ENCODE measurements at regions of chr1 and their contacts with region 1.

Region 1: GRCh38 chr1:194081444-194081843 is 895.0 kb upstream of the B3GALT2 start:
- DNase-seq: no peak
- ATAC-seq: no peak
- H3K4me3 ChIP-seq: no peak overlapping the region
- H3K4me3 Mint-ChIP-seq: no peak overlapping the region
- H3K27ac ChIP-seq: no peak overlapping the region
- H3K27ac Mint-ChIP-seq: no peak overlapping the region
- H3K4me1 ChIP-seq: no peaks in the 10 kb centered on the region
- H3K4me1 Mint-ChIP-seq: no peaks in the 10 kb centered on the region
- H3K27me3 ChIP-seq: no peaks in the 10 kb centered on the region
- H3K27me3 Mint-ChIP-seq: no peaks in the 10 kb centered on the region
- CTCF ChIP-seq: no peak

Region 2: DNA sequence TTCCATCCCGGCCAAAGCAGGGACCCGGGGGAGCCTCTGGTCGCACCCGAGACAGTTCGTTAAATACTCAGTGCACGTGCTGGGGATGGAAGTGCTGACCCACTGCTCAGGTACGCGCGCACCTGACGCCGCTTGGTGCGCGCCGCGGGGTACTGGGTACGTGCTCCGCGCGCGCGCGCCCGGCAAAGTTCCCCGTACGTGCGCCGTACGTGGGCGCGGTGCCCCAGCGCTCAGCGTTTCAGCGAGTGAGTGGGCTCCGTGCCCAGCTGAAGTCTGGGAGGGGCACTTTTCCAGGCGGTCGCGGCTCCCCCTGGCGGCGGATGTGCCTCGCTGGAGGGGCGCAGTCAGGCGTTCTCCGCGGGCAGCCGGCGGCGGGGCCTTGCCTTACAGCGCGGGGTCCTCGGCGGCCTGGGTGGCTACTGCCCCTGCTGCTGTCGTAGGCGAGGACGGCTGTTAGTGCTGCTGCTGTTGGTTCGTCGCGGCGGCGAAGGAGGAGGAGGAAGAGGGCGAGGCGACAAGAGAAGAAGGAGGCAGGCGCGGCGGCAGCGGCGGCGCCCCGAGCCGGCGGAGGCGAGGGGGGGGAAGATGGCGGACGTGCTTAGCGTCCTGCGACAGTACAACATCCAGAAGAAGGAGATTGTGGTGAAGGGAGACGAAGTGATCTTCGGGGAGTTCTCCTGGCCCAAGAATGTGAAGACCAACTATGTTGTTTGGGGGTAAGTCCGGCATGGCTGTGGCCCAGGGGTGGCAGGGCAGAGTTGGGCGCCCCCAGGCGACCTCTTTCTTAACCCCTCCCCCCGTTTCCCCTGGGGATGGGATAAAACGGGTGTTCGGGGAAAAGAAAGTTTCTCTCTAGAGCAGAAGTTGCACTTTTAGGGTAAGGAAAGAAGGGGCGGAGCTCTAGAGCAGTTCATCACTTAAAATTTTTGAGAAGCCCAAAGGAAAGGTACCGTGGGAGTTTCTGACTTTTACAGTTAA is 959.5 kb before region 1 on chr1 and contains the start of gene CDC73:
- CTCF ChIA-PET with region 1: no interaction called
- POLR2A ChIA-PET with region 1: no interaction called
- intact Hi-C with region 1: no loop called
- DNase-seq: peak; percentile 98 to 100 (median 99)
- ATAC-seq: peak; percentile 92
- H3K4me3 ChIP-seq: peak within 1 kb of the TSS; percentile 89 to 98
- H3K4me3 Mint-ChIP-seq: peak within 1 kb of the TSS; percentile 100
- H3K27ac ChIP-seq: peak within 1 kb of the TSS; percentile 94 to 96
- H3K27ac Mint-ChIP-seq: peak within 1 kb of the TSS; percentile 100
- H3K4me1 ChIP-seq: peaks cover 33% of the 10 kb centered on the region
- H3K4me1 Mint-ChIP-seq: peaks cover 55% of the 10 kb centered on the region
- H3K27me3 ChIP-seq: no peaks in the 10 kb centered on the region
- H3K27me3 Mint-ChIP-seq: no peaks in the 10 kb centered on the region
- CTCF ChIP-seq: peak; percentile 84
- total RNA-seq, gene CDC73: 73.9 to 78.8 TPM

Region 3: GRCh38 chr1:193794239-193794638 is 287.2 kb before region 1 on chr1:
- CTCF ChIA-PET with region 1: no interaction called
- POLR2A ChIA-PET with region 1: no interaction called
- intact Hi-C with region 1: no loop called
- DNase-seq: no peak
- ATAC-seq: no peak
- H3K4me3 ChIP-seq: no peak overlapping the region
- H3K4me3 Mint-ChIP-seq: no peak overlapping the region
- H3K27ac ChIP-seq: no peak overlapping the region
- H3K27ac Mint-ChIP-seq: no peak overlapping the region
- H3K4me1 ChIP-seq: no peaks in the 10 kb centered on the region
- H3K4me1 Mint-ChIP-seq: no peaks in the 10 kb centered on the region
- H3K27me3 ChIP-seq: no peaks in the 10 kb centered on the region
- H3K27me3 Mint-ChIP-seq: no peaks in the 10 kb centered on the region
- CTCF ChIP-seq: no peak

Region 4: DNA sequence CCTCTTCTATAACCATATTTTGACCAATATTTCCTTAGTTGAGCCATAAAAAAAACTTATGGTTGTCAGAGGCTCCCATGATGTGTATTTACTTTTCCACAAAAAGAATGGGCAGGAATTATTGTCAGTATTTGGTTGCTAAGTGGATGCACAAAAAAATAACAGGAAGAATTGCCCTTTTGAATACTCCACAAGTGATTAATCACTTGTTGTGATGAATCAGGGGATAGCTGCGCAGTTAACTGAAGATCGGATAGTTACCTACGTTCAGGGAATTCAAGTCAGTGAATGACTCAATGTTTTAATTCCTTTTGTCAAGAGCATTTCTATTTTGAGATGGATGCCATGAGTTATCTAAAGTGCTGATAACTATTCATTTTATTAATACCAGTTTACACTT is 109.8 kb before region 1 on chr1:
- CTCF ChIA-PET with region 1: no interaction called
- POLR2A ChIA-PET with region 1: no interaction called
- intact Hi-C with region 1: loop called in 1 of 2 experiments (anchors 10 kb)
- DNase-seq: no peak
- ATAC-seq: no peak
- H3K4me3 ChIP-seq: no peak overlapping the region
- H3K4me3 Mint-ChIP-seq: no peak overlapping the region
- H3K27ac ChIP-seq: no peak overlapping the region
- H3K27ac Mint-ChIP-seq: no peak overlapping the region
- H3K4me1 ChIP-seq: no peaks in the 10 kb centered on the region
- H3K4me1 Mint-ChIP-seq: no peaks in the 10 kb centered on the region
- H3K27me3 ChIP-seq: no peaks in the 10 kb centered on the region
- H3K27me3 Mint-ChIP-seq: no peaks in the 10 kb centered on the region
- CTCF ChIP-seq: no peak

Measured in CD8-positive, alpha-beta T cell (primary cell).